Dorsolateral prefrontal cortex (tissue), 120 donors: ENCODE measurements at regions of chr14 and their contacts with region 1.

Region 1: GRCh38 chr14:93103392-93104080 is 12.2 kb downstream of the ITPK1 start:
- DNase-seq: no peak
- H3K4me3 ChIP-seq: peak overlapping the region in 1 of 59 donors; percentile 6
- H3K27ac ChIP-seq: no peak overlapping the region
- H3K27me3 ChIP-seq: no peaks in the 10 kb centered on the region
- CTCF ChIP-seq: no peak

Region 2: DNA sequence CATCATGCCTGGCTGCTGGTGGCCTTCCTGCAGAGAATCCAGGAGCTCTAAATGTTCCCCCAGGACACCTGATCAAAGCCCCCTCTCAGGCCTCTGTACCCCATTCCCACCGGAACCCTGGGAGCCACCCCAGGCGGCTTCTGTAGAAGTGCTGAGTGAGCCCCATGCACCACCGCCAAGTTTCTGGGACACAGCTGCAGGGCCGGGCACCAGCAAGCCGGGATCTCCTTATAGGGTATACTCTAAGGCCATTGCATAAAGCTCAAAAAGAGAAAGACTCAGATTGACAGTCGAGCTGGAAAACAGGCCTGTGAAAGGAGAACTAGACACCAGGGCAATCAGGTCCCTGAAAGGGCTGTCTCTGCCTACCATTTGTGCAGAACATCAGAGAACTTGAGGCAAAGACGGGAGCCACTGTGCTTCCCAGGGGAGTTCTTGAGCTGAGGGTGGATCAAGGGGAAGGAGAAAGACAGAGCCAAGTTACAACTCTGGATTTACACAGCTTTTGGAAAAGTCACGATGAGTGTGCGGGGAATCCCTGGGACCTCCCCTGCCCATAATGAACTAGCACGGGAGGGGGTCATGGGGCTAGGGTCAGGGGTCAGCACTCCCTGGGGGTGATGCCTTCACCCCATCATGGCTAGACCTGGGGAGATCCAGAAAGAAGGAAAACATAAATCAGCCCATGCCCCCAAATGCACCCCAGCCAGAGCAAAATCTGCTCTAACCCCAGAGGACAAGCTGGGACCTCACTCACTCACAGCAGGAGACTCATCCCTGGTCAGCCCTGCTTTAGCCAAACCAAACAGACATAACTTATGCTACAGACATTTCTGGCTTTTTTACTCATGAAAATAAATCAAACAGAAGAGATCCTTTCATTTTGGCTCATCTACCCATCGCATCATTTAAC is 38.9 kb before region 1 on chr14:
- intact Hi-C with region 1: loop called in 1 of 2 experiments (anchors 5 kb)
- DNase-seq: no peak
- H3K4me3 ChIP-seq: no peak overlapping the region
- H3K27ac ChIP-seq: peak overlapping the region in 52 of 59 donors; percentile 5 to 79 (median 48)
- H3K27me3 ChIP-seq: no peaks in the 10 kb centered on the region
- CTCF ChIP-seq: no peak

Region 3: DNA sequence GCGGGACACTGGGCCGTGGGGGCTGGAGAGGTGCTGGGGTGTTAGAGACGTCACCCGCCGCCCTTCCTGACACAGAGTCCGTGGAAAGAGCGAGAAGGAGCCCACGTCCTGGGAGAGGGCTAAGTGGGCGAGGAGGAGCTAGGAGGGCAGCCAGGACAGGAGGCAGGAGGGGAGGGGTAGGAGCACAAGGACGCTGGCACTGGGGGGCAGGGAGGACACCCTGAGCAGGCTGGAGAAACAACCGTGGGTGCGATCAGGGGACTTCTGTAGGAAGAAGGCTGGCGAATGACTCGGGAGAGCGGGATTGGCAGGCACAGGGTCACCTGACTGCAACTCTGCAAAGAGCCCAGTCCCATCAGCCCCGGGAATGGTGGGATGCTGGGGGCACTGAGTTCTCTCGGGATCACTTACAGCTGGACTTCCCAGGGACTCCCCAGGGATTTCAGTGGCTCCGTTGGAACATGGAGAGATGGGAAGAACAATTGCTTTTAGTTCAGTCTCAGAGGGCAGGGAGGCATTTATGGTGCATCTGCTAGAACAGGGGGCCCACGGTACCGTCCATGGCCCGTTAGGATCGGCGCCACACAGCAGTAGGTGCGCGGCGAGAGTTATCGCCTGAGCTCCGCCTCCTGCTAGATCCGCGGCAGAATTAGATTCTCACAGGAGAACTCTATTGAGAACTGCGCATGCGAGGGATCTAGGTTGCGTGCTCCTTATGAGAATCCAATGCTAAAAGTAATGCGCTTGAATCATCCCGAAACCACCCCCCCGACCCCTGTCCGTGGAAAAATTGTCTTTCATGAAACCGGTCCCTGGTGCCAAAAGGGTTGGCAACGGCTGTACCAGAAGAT is 127.8 kb after region 1 on chr14:
- intact Hi-C with region 1: no loop called
- DNase-seq: peak in 9 of 10 donors; percentile 32 to 87 (median 74)
- H3K4me3 ChIP-seq: peak overlapping the region; percentile 22 to 80 (median 56)
- H3K27ac ChIP-seq: peak overlapping the region in 32 of 59 donors; percentile 4 to 81 (median 48)
- H3K27me3 ChIP-seq: no peaks in the 10 kb centered on the region
- CTCF ChIP-seq: no peak